Endothelial cell of umbilical vein (primary cell): ENCODE measurements at regions of chr1 and their contacts with region 1.

Region 1: DNA sequence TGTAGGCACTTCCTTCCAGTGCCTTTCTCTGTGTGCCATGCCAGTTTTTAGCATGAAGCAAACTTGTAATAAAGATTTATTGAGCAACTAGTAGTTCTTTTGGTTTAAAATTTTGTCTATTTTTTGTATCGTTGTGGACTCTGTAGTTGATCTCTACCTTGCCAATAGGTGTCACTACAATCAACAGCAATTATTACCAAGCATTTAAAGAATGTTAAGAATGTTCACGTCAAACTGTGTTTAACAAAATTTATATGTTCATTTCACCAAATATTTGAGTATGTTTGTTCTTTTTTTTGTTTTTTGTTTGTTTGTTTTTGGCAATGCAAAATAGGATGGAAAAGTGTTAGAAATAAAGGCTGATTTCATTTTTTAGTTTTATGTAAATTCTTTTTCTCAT is 208.1 kb downstream of the PATJ start:
- DNase-seq: peak; percentile 19
- H3K4me3 ChIP-seq: no peak overlapping the region
- H3K27ac ChIP-seq: no peak overlapping the region
- H3K4me1 ChIP-seq: no peaks in the 10 kb centered on the region
- H3K27me3 ChIP-seq: no peaks in the 10 kb centered on the region
- CTCF ChIP-seq: peak; percentile 10 to 26
- POLR2A ChIP-seq: no peak

Region 2: DNA sequence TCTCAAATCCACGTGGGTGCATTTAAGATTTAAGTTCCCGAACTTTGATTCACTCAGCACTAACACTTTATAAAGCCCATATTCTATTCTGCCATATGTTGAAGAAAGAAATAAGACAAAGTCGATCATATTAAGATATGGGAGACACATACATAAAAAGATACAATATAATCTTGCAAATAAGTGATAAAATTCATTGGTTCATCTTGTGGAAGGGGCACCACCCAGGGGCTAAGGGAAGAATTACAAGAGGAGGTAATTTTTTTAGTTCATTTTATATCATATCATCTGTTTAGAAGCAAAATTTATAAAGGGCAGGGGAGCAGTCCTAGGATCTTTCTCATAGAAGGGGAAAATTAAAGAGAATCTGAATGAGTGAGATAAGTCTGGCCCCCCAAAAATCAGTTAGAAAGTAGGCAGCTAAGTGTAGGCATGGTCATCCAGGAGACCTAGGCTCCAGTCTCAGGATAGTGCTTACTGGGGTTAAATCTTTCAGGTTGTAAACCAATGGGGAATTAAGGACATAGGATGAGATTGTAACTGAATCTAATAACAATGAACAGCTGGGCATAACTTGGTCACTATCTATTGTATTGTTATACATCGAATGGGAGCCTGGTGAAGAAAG is 120.1 kb after region 1 on chr1:
- CTCF ChIA-PET with region 1: interaction called, 3 read pairs
- POLR2A ChIA-PET with region 1: no interaction called
- dilution Hi-C with region 1: no loop called
- intact Hi-C with region 1: loop called (anchors 1 kb)
- DNase-seq: peak; percentile 31
- H3K4me3 ChIP-seq: no peak overlapping the region
- H3K27ac ChIP-seq: no peak overlapping the region
- H3K4me1 ChIP-seq: no peaks in the 10 kb centered on the region
- H3K27me3 ChIP-seq: peaks cover 0 to 2% of the 10 kb centered on the region in 2 experiments
- CTCF ChIP-seq: peak; percentile 27 to 32
- POLR2A ChIP-seq: no peak